ENCODE measurements at regions of chr10 and their contacts with region 1.

Region 1: DNA sequence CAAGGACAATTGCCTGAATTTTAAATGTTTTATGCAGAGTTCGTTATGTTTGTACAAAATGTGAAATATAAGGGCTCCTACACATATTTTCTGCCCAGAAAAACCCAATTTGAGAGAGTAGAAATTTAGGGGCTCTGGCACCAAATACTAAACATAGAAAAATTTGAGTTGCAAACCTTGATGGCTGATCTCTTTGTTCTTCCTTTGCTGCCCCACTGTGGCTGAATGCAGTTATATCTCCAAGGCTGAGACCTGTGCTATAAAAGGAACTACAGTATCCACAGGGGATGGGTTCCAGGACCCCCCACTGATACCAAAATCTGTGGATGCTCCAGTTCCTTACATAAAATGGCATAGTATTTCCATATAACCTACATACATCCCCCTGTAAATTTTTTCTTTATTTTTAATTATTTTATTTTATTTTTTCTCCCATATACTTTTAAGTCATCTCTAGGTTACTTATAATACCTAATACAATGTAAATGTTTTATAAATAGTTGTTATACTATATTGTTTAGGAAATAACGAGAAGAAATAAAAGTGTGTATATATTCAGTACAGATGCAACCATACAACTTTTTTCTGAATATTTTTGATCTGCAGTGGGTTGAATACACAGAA is 22.5 kb downstream of the CFAP43 start:
- DNase-seq: peak in 2 of 3 donors; percentile 22 to 25
- H3K4me3 ChIP-seq: no peak overlapping the region
- H3K4me3 Mint-ChIP-seq: no peak overlapping the region
- H3K27ac ChIP-seq: no peak overlapping the region
- H3K27ac Mint-ChIP-seq: no peak overlapping the region
- H3K4me1 ChIP-seq: no peaks in the 10 kb centered on the region
- H3K4me1 Mint-ChIP-seq: peaks cover 2% of the 10 kb centered on the region
- H3K27me3 ChIP-seq: no peaks in the 10 kb centered on the region
- H3K27me3 Mint-ChIP-seq: peaks cover 0 to 4% (median 0%) of the 10 kb centered on the region in 3 donors
- CTCF ChIP-seq: peak; percentile 59

Region 2: GRCh38 chr10:103727546-103727963 is 482.1 kb before region 1 on chr10:
- intact Hi-C with region 1: no loop called
- DNase-seq: no peak
- H3K4me3 ChIP-seq: no peak overlapping the region
- H3K4me3 Mint-ChIP-seq: no peak overlapping the region
- H3K27ac ChIP-seq: no peak overlapping the region
- H3K27ac Mint-ChIP-seq: no peak overlapping the region
- H3K4me1 ChIP-seq: no peaks in the 10 kb centered on the region
- H3K4me1 Mint-ChIP-seq: no peaks in the 10 kb centered on the region
- H3K27me3 ChIP-seq: no peaks in the 10 kb centered on the region
- H3K27me3 Mint-ChIP-seq: peaks cover 0 to 4% (median 4%) of the 10 kb centered on the region in 3 donors
- CTCF ChIP-seq: no peak

Region 3: GRCh38 chr10:103895411-103896186 is 314.1 kb before region 1 on chr10:
- intact Hi-C with region 1: loop called in 1 of 2 experiments (anchors 10 kb)
- DNase-seq: no peak
- H3K4me3 ChIP-seq: no peak overlapping the region
- H3K4me3 Mint-ChIP-seq: no peak overlapping the region
- H3K27ac ChIP-seq: peak overlapping the region in 1 of 2 donors; percentile 62
- H3K27ac Mint-ChIP-seq: peak overlapping the region in 6 of 7 donors; percentile 2 to 55 (median 39)
- H3K4me1 ChIP-seq: peaks cover 3 to 21% of the 10 kb centered on the region in 2 donors
- H3K4me1 Mint-ChIP-seq: peaks cover 14% of the 10 kb centered on the region
- H3K27me3 ChIP-seq: no peaks in the 10 kb centered on the region
- H3K27me3 Mint-ChIP-seq: no peaks in the 10 kb centered on the region
- CTCF ChIP-seq: no peak

Region 4: GRCh38 chr10:104049497-104050250 is 160.0 kb before region 1 on chr10:
- intact Hi-C with region 1: loop called in 1 of 2 experiments (anchors 10 kb)
- DNase-seq: peak in 1 of 3 donors; percentile 14
- H3K4me3 ChIP-seq: no peak overlapping the region
- H3K4me3 Mint-ChIP-seq: no peak overlapping the region
- H3K27ac ChIP-seq: no peak overlapping the region
- H3K27ac Mint-ChIP-seq: peak overlapping the region in 1 of 7 donors; percentile 7
- H3K4me1 ChIP-seq: no peaks in the 10 kb centered on the region
- H3K4me1 Mint-ChIP-seq: peaks cover 2% of the 10 kb centered on the region
- H3K27me3 ChIP-seq: no peaks in the 10 kb centered on the region
- H3K27me3 Mint-ChIP-seq: peaks cover 0 to 8% (median 0%) of the 10 kb centered on the region in 3 donors
- CTCF ChIP-seq: no peak

Region 5: GRCh38 chr10:104254493-104255310 is 45.0 kb after region 1 on chr10 and contains the start of gene GSTO1:
- intact Hi-C with region 1: no loop called
- DNase-seq: peak; percentile 80 to 84 (median 82)
- H3K4me3 ChIP-seq: peak within 1 kb of the TSS; percentile 96 to 97 (median 96)
- H3K4me3 Mint-ChIP-seq: peak within 1 kb of the TSS; percentile 88 to 98
- H3K27ac ChIP-seq: peak within 1 kb of the TSS; percentile 96 to 99
- H3K27ac Mint-ChIP-seq: peak within 1 kb of the TSS; percentile 96 to 99 (median 99)
- H3K4me1 ChIP-seq: peaks cover 44 to 58% of the 10 kb centered on the region in 2 donors
- H3K4me1 Mint-ChIP-seq: peaks cover 67% of the 10 kb centered on the region
- H3K27me3 ChIP-seq: no peaks in the 10 kb centered on the region
- H3K27me3 Mint-ChIP-seq: peaks cover 0 to 2% (median 0%) of the 10 kb centered on the region in 3 donors
- CTCF ChIP-seq: no peak
- polyA plus RNA-seq, gene GSTO1: 131 to 581 (median 495) TPM

Measured in CD14-positive monocyte (primary cell).